K562 (cell line): ENCODE measurements at regions of chr6 and their contacts with region 1.

Region 1: DNA sequence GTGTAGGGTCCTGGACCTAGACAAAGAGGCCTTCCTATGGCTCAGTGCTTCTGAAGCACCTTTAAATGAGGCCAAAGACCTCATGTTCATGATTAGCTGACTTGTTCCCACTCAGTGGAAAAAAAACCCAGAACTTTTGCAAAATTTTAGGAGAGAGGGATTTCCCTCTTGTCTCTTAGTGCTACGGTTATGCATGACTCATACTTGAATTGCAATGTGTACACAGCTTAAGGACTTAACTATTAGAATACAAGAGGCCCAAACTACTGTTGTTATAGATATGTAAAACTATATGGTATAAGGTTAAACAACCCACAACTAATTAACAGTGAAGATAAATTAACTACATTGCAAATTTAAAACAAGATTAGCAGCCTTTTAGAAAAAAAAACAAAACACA is 32.3 kb upstream of the HLA-A start:
- DNase-seq: no peak
- ATAC-seq: no peak
- H3K4me3 ChIP-seq: no peak overlapping the region
- H3K27ac ChIP-seq: no peak overlapping the region
- H3K4me1 ChIP-seq: no peaks in the 10 kb centered on the region
- H3K27me3 ChIP-seq: peaks cover 12 to 31% of the 10 kb centered on the region in 2 experiments
- CTCF ChIP-seq: no peak
- EP300 ChIP-seq: no peak
- POLR2A ChIP-seq: no peak
- RAD21 ChIP-seq: no peak

Region 2: DNA sequence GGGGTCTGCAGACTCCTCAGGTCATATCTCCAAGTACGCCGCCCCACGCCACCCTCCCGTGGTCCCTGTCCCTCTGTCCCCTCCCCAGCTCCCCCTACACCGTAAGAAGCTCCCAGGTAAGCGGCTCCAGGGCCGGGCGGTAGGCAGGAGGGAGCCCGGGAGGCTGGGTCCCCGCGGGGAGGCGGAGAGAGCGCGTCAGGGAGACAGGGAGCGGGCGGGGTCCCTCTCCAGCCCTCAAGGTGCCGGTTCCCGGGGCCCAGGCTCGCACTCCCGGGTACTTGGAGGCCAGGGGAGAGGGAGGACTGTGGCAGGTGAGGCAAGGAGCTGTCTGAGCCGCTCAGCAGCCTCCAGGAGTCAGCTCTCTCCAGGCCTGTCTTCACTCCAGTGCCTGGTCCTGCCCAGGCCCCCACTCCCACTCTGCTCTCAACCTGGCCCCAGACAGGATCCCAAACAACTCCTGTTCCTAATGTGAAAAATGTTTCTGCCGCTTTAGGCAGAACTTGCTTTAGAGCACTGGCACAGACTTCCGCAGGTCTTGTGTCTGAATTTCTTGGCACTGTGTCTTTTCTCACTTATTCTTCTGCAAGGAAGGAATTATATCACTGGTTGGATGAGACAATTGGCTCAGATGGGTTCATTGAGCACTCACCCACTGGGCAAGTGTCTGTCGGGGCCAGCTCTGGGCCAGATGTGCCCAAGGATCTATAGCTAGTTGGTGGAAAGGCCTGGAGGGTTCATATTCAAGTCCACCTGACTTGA is 45.8 kb before region 1 on chr6:
- CTCF ChIA-PET with region 1: no interaction called
- POLR2A ChIA-PET with region 1: no interaction called
- in situ Hi-C with region 1: loop called (anchors 5 kb)
- intact Hi-C with region 1: no loop called
- DNase-seq: no peak
- ATAC-seq: no peak; the same call in 2 of the 3 replicates
- H3K4me3 ChIP-seq: no peak overlapping the region
- H3K27ac ChIP-seq: no peak overlapping the region
- H3K4me1 ChIP-seq: no peaks in the 10 kb centered on the region
- H3K27me3 ChIP-seq: peaks cover 21 to 63% of the 10 kb centered on the region in 2 experiments
- CTCF ChIP-seq: no peak
- EP300 ChIP-seq: no peak
- POLR2A ChIP-seq: no peak
- RAD21 ChIP-seq: no peak

Region 3: GRCh38 chr6:30238174-30238795 is 328.3 kb after region 1 on chr6:
- CTCF ChIA-PET with region 1: no interaction called
- POLR2A ChIA-PET with region 1: no interaction called
- in situ Hi-C with region 1: no loop called
- intact Hi-C with region 1: no loop called
- DNase-seq: peak in 2 of 4 experiments; percentile 49 to 65
- ATAC-seq: peak; percentile 93
- H3K4me3 ChIP-seq: no peak overlapping the region
- H3K27ac ChIP-seq: no peak overlapping the region
- H3K4me1 ChIP-seq: no peaks in the 10 kb centered on the region
- H3K27me3 ChIP-seq: peaks cover 16 to 34% of the 10 kb centered on the region in 2 experiments; a peak in 4 of 5 replicates
- CTCF ChIP-seq: peak; percentile 73 to 82 (median 76)
- EP300 ChIP-seq: no peak
- POLR2A ChIP-seq: no peak
- RAD21 ChIP-seq: peak; percentile 67 to 93

Region 4: GRCh38 chr6:30396833-30397479 is 487.0 kb after region 1 on chr6:
- CTCF ChIA-PET with region 1: no interaction called
- POLR2A ChIA-PET with region 1: no interaction called
- in situ Hi-C with region 1: no loop called
- intact Hi-C with region 1: no loop called
- DNase-seq: peak; percentile 90 to 96 (median 94)
- ATAC-seq: peak; percentile 100
- H3K4me3 ChIP-seq: no peak overlapping the region
- H3K27ac ChIP-seq: no peak overlapping the region
- H3K4me1 ChIP-seq: peaks cover 0 to 3% of the 10 kb centered on the region in 2 experiments; a peak in 2 of 5 replicates
- H3K27me3 ChIP-seq: peaks cover 26 to 38% of the 10 kb centered on the region in 2 experiments
- CTCF ChIP-seq: peak; percentile 96 to 98 (median 96)
- EP300 ChIP-seq: no peak
- POLR2A ChIP-seq: no peak
- RAD21 ChIP-seq: peak; percentile 90 to 99